Heart right ventricle (tissue), 16 donors: ENCODE measurements at regions of chr5 and their contacts with region 1.

Region 1: DNA sequence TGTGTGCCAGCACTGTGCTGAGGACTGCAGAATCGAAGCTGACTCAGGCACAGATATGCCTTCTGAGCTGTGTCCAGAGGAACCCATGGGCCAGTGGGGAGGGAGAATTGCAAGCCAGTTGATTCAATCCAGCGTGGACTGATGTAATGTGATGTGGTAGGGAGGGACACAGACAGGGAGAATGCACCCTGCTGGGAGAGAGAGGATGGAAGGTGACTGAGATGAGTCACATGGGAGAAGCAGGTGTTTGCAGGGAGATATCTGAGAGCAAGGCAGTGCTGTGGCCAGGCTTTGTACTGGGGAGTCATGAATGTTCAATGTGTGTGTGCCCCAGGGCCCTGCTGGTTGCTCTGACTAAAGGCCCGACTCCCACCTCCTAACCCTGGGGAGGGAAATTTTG is 75.7 kb downstream of the IRX1 start:
- DNase-seq: no peak
- ATAC-seq: no peak
- H3K4me3 ChIP-seq: no peak overlapping the region
- H3K27ac ChIP-seq: no peak overlapping the region
- H3K4me1 ChIP-seq: no peaks in the 10 kb centered on the region
- H3K27me3 ChIP-seq: no peaks in the 10 kb centered on the region
- CTCF ChIP-seq: no peak

Region 2: GRCh38 chr5:3118340-3118739 is 553.0 kb before region 1 on chr5:
- intact Hi-C with region 1: no loop called
- DNase-seq: no peak
- ATAC-seq: no peak
- H3K4me3 ChIP-seq: no peak overlapping the region
- H3K27ac ChIP-seq: no peak overlapping the region
- H3K4me1 ChIP-seq: no peaks in the 10 kb centered on the region
- H3K27me3 ChIP-seq: peaks cover 6 to 87% (median 77%) of the 10 kb centered on the region in 7 donors
- CTCF ChIP-seq: no peak

Region 3: GRCh38 chr5:3694819-3695218 is 23.5 kb after region 1 on chr5:
- intact Hi-C with region 1: loop called in 1 of 10 experiments (anchors 1 kb)
- DNase-seq: no peak
- ATAC-seq: no peak
- H3K4me3 ChIP-seq: no peak overlapping the region
- H3K27ac ChIP-seq: no peak overlapping the region
- H3K4me1 ChIP-seq: no peaks in the 10 kb centered on the region
- H3K27me3 ChIP-seq: no peaks in the 10 kb centered on the region
- CTCF ChIP-seq: no peak